Ovary (tissue), 10 donors: ENCODE measurements at regions of chr7 and their contacts with region 1.

Region 1: GRCh38 chr7:8217200-8218068 is 44.5 kb downstream of the ICA1 start:
- DNase-seq: no peak
- H3K4me3 ChIP-seq: no peak overlapping the region
- H3K27ac ChIP-seq: no peak overlapping the region
- H3K4me1 ChIP-seq: no peaks in the 10 kb centered on the region
- H3K27me3 ChIP-seq: no peaks in the 10 kb centered on the region
- CTCF ChIP-seq: peak; percentile 55 to 68 (median 62)
- EP300 ChIP-seq: no peak
- POLR2A ChIP-seq: no peak

Region 2: GRCh38 chr7:7103343-7104313 is 1113.8 kb before region 1 on chr7:
- intact Hi-C with region 1: loop called in 1 of 4 experiments (anchors 5 kb)
- DNase-seq: no peak
- H3K4me3 ChIP-seq: no peak overlapping the region
- H3K27ac ChIP-seq: no peak overlapping the region
- H3K4me1 ChIP-seq: no peaks in the 10 kb centered on the region
- H3K27me3 ChIP-seq: no peaks in the 10 kb centered on the region
- CTCF ChIP-seq: peak in 2 of 3 donors; percentile 41 to 47
- EP300 ChIP-seq: no peak
- POLR2A ChIP-seq: no peak

Region 3: GRCh38 chr7:7424151-7424873 is 793.1 kb before region 1 on chr7:
- intact Hi-C with region 1: loop called in 1 of 4 experiments (anchors 5 kb)
- DNase-seq: peak; percentile 36 to 72 (median 58)
- H3K4me3 ChIP-seq: peak overlapping the region; percentile 39
- H3K27ac ChIP-seq: peak overlapping the region in 1 of 2 donors; percentile 17
- H3K4me1 ChIP-seq: no peaks in the 10 kb centered on the region
- H3K27me3 ChIP-seq: no peaks in the 10 kb centered on the region
- CTCF ChIP-seq: peak; percentile 30 to 77 (median 63)
- EP300 ChIP-seq: no peak
- POLR2A ChIP-seq: no peak

Region 4: DNA sequence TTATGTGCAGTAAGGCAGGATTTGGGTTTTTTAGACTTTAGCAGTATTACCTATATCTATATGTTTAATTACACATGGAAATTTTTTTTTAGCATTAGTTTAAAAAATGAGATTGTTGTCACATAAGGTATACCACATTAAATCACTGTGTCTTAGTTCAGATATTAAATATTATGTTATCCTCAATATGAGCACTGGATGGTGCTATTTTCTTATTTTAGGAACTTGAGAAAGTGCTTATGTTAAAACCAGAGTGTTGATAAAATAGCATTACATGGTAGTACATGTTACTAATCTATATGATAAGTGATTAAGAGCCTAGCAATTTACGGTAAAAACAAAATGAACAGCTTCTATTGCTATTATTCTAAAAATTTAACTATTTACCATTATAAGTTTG is 622.0 kb before region 1 on chr7:
- intact Hi-C with region 1: loop called in 1 of 4 experiments (anchors 10 kb)
- DNase-seq: no peak
- H3K4me3 ChIP-seq: no peak overlapping the region
- H3K27ac ChIP-seq: no peak overlapping the region
- H3K4me1 ChIP-seq: no peaks in the 10 kb centered on the region
- H3K27me3 ChIP-seq: peaks cover 2% of the 10 kb centered on the region
- CTCF ChIP-seq: peak in 1 of 3 donors; percentile 14
- EP300 ChIP-seq: no peak
- POLR2A ChIP-seq: no peak

Region 5: GRCh38 chr7:7681179-7681935 is 536.1 kb before region 1 on chr7:
- intact Hi-C with region 1: loop called in 1 of 4 experiments (anchors 5 kb)
- DNase-seq: peak in 1 of 5 donors; percentile 58
- H3K4me3 ChIP-seq: no peak overlapping the region
- H3K27ac ChIP-seq: peak overlapping the region in 1 of 2 donors; percentile 46
- H3K4me1 ChIP-seq: no peaks in the 10 kb centered on the region
- H3K27me3 ChIP-seq: no peaks in the 10 kb centered on the region
- CTCF ChIP-seq: peak; percentile 31 to 52 (median 47)
- EP300 ChIP-seq: no peak
- POLR2A ChIP-seq: no peak

Region 6: DNA sequence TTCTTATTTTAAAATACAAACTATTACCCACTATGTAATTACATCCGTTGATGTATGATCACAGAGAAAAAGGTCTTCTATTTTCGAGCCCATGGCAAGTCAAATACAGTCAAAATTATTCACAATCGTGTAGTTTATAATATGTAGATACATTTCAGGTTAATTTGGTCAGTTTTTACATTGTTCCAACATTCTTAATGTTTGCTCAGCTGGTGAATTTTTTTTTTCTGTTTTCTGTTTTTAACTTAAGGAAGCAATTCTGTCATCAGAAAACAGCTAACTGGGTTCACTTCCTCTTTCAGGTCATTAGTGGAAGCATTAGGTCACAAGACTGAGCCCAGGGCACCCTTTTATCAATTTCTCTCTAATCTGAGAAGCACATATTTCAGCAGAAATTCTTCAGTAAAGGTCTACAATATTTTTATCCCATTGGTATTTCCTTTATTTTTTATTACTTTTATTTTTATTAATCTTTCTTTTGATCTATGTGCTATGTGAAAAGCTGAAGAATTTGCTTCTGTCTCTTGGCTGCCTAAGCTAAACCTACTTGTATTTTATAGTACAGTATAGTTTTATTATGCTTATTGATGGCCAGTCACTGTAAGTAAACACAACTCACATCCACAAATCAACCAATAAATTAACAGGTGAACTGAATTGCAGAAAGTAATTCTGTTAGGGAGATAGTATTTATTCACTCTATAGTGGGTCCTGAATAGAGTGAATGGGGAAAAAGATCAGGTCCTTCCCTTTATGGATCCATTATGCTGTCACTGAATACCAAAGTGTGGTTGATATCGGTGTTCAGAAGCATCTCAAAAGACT is 40.1 kb before region 1 on chr7:
- intact Hi-C with region 1: no loop called
- DNase-seq: no peak
- H3K4me3 ChIP-seq: no peak overlapping the region
- H3K27ac ChIP-seq: no peak overlapping the region
- H3K4me1 ChIP-seq: no peaks in the 10 kb centered on the region
- H3K27me3 ChIP-seq: no peaks in the 10 kb centered on the region
- CTCF ChIP-seq: no peak
- EP300 ChIP-seq: no peak
- POLR2A ChIP-seq: no peak